Transverse colon (tissue), 4 donors: ENCODE measurements at regions of chrX and their contacts with region 1.

Region 1: GRCh38 chrX:154351183-154352011 is 23.0 kb downstream of the FLNA start:
- DNase-seq: peak; percentile 71
- H3K4me3 ChIP-seq: no peak overlapping the region
- H3K27ac ChIP-seq: peak overlapping the region; percentile 40 to 99 (median 64)
- H3K4me1 ChIP-seq: peaks cover 0 to 11% (median 5%) of the 10 kb centered on the region in 4 donors
- H3K27me3 ChIP-seq: no peaks in the 10 kb centered on the region
- CTCF ChIP-seq: no peak
- EP300 ChIP-seq: no peak
- POLR2A ChIP-seq: no peak

Region 2: DNA sequence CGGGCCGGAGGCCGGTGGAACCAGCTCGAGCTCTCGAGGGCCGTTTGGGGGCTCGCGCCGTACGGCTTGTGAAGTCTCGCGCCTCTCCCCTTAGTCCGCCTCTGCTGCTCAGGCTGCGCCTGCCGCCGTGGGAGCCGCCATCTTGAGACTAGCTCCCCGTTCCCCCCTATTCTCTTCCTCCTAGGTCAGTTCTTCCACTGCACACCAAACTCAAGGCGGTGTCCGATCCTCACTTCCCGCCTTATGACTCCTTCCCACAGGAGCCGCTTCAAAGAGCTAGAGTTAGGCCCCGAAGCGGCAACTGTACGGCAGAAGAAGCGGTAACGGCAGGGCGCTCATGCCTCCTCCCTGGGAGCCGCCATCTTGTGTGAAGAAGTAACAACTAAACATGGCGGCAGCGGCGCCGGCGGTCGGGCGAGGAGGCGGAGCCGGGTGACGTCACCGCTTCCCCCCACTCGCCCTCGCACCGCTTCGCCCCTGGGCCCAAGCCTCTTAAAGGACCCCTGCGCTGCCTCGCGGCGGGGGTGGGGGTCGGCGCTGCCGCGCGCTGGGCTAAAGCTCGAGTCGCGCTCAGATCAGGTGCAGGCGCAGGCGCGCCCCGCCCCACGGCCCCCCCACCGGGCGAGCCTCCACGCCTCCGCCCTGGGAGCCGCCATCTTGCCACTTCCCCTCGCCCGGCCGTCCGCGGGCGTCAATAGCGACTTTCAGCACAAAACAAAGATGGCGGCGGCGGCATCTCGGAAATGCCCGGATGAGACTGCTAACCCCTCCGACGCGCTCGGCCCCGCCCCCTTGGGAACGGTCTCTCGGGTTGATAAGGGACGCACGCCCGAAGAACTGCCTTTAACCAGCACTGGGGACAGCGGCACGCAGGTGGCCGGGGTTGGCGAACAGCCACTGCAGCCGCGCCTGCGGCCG is 379.7 kb before region 1 on chrX and contains the start of gene HCFC1:
- in situ Hi-C with region 1: no loop called
- intact Hi-C with region 1: no loop called
- DNase-seq: peak; percentile 95
- H3K4me3 ChIP-seq: peak within 1 kb of the TSS; percentile 63 to 91 (median 86)
- H3K27ac ChIP-seq: peak within 1 kb of the TSS; percentile 94 to 100 (median 98)
- H3K4me1 ChIP-seq: peaks cover 0 to 48% (median 46%) of the 10 kb centered on the region in 4 donors
- H3K27me3 ChIP-seq: no peaks in the 10 kb centered on the region
- CTCF ChIP-seq: no peak
- EP300 ChIP-seq: no peak
- POLR2A ChIP-seq: no peak
- total RNA-seq, gene HCFC1: 34.0 to 68.5 (median 49.8) TPM

Region 3: DNA sequence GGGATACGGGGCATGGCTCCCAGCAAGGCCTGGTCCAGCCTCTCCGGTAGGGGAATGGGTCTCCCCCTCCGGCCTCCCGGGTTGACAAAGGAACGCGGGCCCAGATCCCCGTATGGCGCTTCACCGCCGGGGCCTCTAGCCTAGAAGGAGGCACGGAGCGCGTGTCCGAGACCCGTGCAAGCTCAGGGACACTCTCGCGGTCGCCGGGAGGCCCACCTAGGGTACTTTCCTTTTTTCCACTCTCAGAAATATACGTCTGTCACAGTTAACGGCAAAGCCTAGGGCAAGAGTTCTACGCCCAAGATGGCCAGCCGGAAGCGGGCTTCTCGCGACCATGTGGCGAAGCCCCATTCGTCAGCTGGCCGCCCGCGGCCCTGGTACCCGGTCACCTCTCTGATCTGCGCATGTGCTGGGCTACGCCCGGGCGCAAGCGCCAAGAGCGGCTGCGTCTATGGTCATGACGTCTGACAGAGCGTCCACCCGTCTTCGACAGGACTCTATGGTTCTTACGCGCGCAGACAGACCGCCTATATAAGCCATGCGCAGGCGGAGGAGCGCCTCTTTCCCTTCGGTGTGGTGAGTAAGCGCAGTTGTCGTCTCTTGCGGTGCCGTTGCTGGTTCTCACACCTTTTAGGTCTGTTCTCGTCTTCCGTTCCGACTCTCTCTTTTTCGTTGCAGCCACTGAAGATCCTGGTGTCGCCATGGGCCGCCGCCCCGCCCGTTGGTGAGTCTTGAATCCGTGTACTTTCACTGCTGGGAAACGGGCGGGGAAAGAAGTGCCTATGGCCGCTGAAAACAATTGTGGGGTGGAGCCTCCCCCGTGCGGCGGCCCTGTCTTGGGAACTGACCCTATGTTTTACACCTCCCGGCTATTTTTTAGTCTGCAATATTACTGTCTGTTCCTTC is 46.7 kb after region 1 on chrX and contains the start of gene RPL10:
- in situ Hi-C with region 1: no loop called
- intact Hi-C with region 1: loop called (anchors 5 kb)
- DNase-seq: peak; percentile 94
- H3K4me3 ChIP-seq: peak within 1 kb of the TSS; percentile 60 to 84 (median 67)
- H3K27ac ChIP-seq: peak within 1 kb of the TSS; percentile 97 to 99 (median 98)
- H3K4me1 ChIP-seq: peaks cover 0 to 20% (median 8%) of the 10 kb centered on the region in 4 donors
- H3K27me3 ChIP-seq: no peaks in the 10 kb centered on the region
- CTCF ChIP-seq: no peak
- EP300 ChIP-seq: no peak
- POLR2A ChIP-seq: peak; percentile 98
- total RNA-seq, gene RPL10: 1,352 to 4,861 (median 3,415) TPM